CD4-positive, alpha-beta memory T cell (primary cell): ENCODE measurements at regions of chr1 and their contacts with region 1.

Region 1: GRCh38 chr1:154558575-154559465 is at the start of gene UBE2Q1:
- DNase-seq: peak; percentile 99 to 100 (median 100)
- H3K4me3 ChIP-seq: peak within 1 kb of the TSS; percentile 83 to 84
- H3K4me3 Mint-ChIP-seq: peak within 1 kb of the TSS; percentile 91 to 97 (median 94)
- H3K27ac ChIP-seq: peak within 1 kb of the TSS; percentile 82
- H3K27ac Mint-ChIP-seq: peak within 1 kb of the TSS; percentile 85 to 96 (median 94)
- H3K4me1 ChIP-seq: peaks cover 38% of the 10 kb centered on the region
- H3K4me1 Mint-ChIP-seq: peaks cover 22 to 45% (median 38%) of the 10 kb centered on the region in 4 donors
- H3K27me3 ChIP-seq: no peaks in the 10 kb centered on the region
- H3K27me3 Mint-ChIP-seq: no peaks in the 10 kb centered on the region
- total RNA-seq, gene UBE2Q1: 112 to 132 TPM

Region 2: DNA sequence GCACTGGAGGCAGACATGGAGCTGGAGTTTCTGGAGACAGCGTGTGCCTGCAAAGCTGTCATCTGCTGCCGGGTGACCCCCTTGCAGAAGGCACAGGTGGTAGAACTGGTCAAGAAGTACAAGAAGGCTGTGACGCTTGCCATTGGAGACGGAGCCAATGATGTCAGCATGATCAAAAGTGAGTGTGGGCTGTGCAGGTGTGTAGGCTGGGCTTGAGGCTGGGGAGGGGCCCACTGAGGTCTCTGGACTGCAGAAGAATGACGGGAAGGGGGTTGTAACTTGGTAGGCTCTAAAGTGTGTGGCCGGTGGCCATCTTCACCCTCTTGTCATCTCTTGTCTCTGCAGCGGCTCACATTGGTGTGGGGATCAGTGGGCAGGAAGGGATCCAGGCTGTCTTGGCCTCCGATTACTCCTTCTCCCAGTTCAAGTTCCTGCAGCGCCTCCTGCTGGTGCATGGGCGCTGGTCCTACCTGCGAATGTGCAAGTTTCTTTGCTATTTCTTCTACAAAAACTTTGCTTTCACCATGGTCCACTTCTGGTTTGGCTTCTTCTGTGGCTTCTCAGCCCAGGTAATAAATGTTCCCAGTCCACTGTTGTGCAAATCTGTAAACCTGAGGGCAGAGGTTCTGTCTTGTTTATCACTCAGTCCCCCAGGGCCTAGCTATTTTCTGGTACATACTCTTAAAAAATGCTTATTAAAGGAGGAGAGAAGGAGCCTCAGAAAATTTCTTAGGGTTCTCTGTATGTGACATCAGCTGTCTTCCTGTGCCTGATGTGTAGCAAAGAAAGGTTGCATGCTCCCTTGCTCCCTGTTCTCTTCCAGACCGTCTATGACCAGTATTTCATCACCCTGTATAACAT is 213.6 kb before region 1 on chr1:
- CTCF ChIA-PET with region 1: no interaction called
- POLR2A ChIA-PET with region 1: no interaction called
- intact Hi-C with region 1: loop called (anchors 5 kb)
- DNase-seq: peak; percentile 75 to 84 (median 81)
- H3K4me3 ChIP-seq: peak overlapping the region; percentile 62
- H3K4me3 Mint-ChIP-seq: peak overlapping the region; percentile 87 to 99 (median 94)
- H3K27ac ChIP-seq: peak overlapping the region; percentile 66
- H3K27ac Mint-ChIP-seq: peak overlapping the region; percentile 86 to 98 (median 92)
- H3K4me1 ChIP-seq: peaks cover 96% of the 10 kb centered on the region
- H3K4me1 Mint-ChIP-seq: peaks cover 54 to 98% (median 76%) of the 10 kb centered on the region in 4 donors
- H3K27me3 ChIP-seq: no peaks in the 10 kb centered on the region
- H3K27me3 Mint-ChIP-seq: no peaks in the 10 kb centered on the region

Region 3: GRCh38 chr1:154669464-154670282 is 110.9 kb after region 1 on chr1:
- CTCF ChIA-PET with region 1: interaction called, 15 read pairs
- POLR2A ChIA-PET with region 1: no interaction called
- intact Hi-C with region 1: loop called (anchors 1 kb)
- DNase-seq: peak; percentile 65 to 73 (median 68)
- H3K4me3 ChIP-seq: no peak overlapping the region
- H3K4me3 Mint-ChIP-seq: no peak overlapping the region
- H3K27ac ChIP-seq: no peak overlapping the region
- H3K27ac Mint-ChIP-seq: no peak overlapping the region
- H3K4me1 ChIP-seq: no peaks in the 10 kb centered on the region
- H3K4me1 Mint-ChIP-seq: no peaks in the 10 kb centered on the region
- H3K27me3 ChIP-seq: no peaks in the 10 kb centered on the region
- H3K27me3 Mint-ChIP-seq: peaks cover 2% of the 10 kb centered on the region in 2 donors

Region 4: DNA sequence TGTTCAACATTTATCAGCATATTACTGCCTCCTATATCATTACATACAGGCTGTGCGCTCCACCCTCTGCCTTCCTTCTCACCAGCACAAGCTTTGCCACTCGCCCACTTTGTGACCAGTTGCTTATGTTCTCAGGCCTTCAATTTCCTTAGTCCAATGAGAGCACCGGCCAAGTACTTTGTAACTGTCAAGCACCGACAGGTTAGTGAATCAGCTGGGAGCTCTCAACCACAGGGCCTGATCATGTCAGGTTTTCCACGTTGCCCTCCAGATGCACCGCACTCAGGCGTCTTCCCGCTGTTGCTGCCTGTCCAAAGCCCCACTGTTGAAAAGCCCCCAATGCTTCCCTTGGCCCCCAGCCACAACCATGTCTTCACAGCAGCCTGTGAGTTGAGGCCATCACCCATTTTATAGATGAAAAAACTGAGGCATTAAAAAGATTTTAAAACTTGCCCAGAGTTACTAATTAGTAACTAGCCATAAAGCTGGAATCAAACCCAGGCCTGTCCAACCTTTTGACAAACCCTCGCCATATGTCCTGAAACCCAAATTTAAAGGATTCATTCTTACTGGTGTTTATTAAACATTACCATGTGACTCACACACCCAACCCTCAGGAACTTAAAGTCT is 314.6 kb after region 1 on chr1:
- CTCF ChIA-PET with region 1: interaction called, 29 read pairs
- POLR2A ChIA-PET with region 1: interaction called, 5 read pairs
- intact Hi-C with region 1: loop called (anchors 1 kb)
- DNase-seq: no peak
- H3K4me3 ChIP-seq: no peak overlapping the region
- H3K4me3 Mint-ChIP-seq: no peak overlapping the region
- H3K27ac ChIP-seq: no peak overlapping the region
- H3K27ac Mint-ChIP-seq: no peak overlapping the region
- H3K4me1 ChIP-seq: peaks cover 16% of the 10 kb centered on the region
- H3K4me1 Mint-ChIP-seq: peaks cover 8 to 28% (median 20%) of the 10 kb centered on the region in 4 donors
- H3K27me3 ChIP-seq: peaks cover 15% of the 10 kb centered on the region
- H3K27me3 Mint-ChIP-seq: peaks cover 21 to 29% of the 10 kb centered on the region in 2 donors

Region 5: GRCh38 chr1:155001675-155002463 is 443.0 kb after region 1 on chr1:
- CTCF ChIA-PET with region 1: interaction called, 3 read pairs
- POLR2A ChIA-PET with region 1: interaction called, 3 read pairs
- intact Hi-C with region 1: loop called (anchors 5 kb)
- DNase-seq: peak; percentile 95 to 98 (median 97)
- H3K4me3 ChIP-seq: peak overlapping the region; percentile 78 to 80
- H3K4me3 Mint-ChIP-seq: peak overlapping the region; percentile 88 to 99 (median 96)
- H3K27ac ChIP-seq: peak overlapping the region; percentile 92
- H3K27ac Mint-ChIP-seq: peak overlapping the region; percentile 90 to 99 (median 95)
- H3K4me1 ChIP-seq: peaks cover 59% of the 10 kb centered on the region
- H3K4me1 Mint-ChIP-seq: peaks cover 39 to 78% (median 51%) of the 10 kb centered on the region in 4 donors
- H3K27me3 ChIP-seq: no peaks in the 10 kb centered on the region
- H3K27me3 Mint-ChIP-seq: no peaks in the 10 kb centered on the region

Region 6: GRCh38 chr1:155084722-155085503 is 526.1 kb after region 1 on chr1:
- CTCF ChIA-PET with region 1: interaction called, 9 read pairs
- POLR2A ChIA-PET with region 1: interaction called, 10 read pairs
- intact Hi-C with region 1: loop called (anchors 1 kb)
- DNase-seq: peak; percentile 92 to 96 (median 92)
- H3K4me3 ChIP-seq: peak overlapping the region; percentile 80 to 95
- H3K4me3 Mint-ChIP-seq: peak overlapping the region; percentile 91 to 98 (median 94)
- H3K27ac ChIP-seq: peak overlapping the region; percentile 54
- H3K27ac Mint-ChIP-seq: peak overlapping the region; percentile 88 to 98 (median 94)
- H3K4me1 ChIP-seq: peaks cover 57% of the 10 kb centered on the region
- H3K4me1 Mint-ChIP-seq: peaks cover 22 to 44% (median 34%) of the 10 kb centered on the region in 4 donors
- H3K27me3 ChIP-seq: peaks cover 34% of the 10 kb centered on the region
- H3K27me3 Mint-ChIP-seq: peaks cover 13 to 30% of the 10 kb centered on the region in 2 donors